ENCODE measurements at regions of chr5 and their contacts with region 1.

Region 1: GRCh38 chr5:68460147-68460798 is 244.7 kb downstream of the PIK3R1 start:
- DNase-seq: peak in 2 of 5 donors; percentile 23 to 46
- ATAC-seq: peak in 3 of 4 donors; percentile 29 to 53 (median 49)
- H3K4me3 ChIP-seq: no peak overlapping the region
- H3K27ac ChIP-seq: no peak overlapping the region
- H3K4me1 ChIP-seq: peaks cover 0 to 19% (median 7%) of the 10 kb centered on the region in 12 donors
- H3K27me3 ChIP-seq: no peaks in the 10 kb centered on the region
- CTCF ChIP-seq: peak; percentile 56 to 85 (median 77)
- POLR2A ChIP-seq: no peak

Region 2: GRCh38 chr5:68343421-68343826 is 116.8 kb before region 1 on chr5:
- intact Hi-C with region 1: loop called in 1 of 10 experiments (anchors 5 kb)
- DNase-seq: peak in 4 of 5 donors; percentile 36 to 87 (median 46)
- ATAC-seq: peak; percentile 93 to 97 (median 96)
- H3K4me3 ChIP-seq: no peak overlapping the region
- H3K27ac ChIP-seq: peak overlapping the region; percentile 31 to 70 (median 58)
- H3K4me1 ChIP-seq: peaks cover 0 to 33% (median 5%) of the 10 kb centered on the region in 12 donors
- H3K27me3 ChIP-seq: no peaks in the 10 kb centered on the region
- CTCF ChIP-seq: no peak
- POLR2A ChIP-seq: no peak

Region 3: DNA sequence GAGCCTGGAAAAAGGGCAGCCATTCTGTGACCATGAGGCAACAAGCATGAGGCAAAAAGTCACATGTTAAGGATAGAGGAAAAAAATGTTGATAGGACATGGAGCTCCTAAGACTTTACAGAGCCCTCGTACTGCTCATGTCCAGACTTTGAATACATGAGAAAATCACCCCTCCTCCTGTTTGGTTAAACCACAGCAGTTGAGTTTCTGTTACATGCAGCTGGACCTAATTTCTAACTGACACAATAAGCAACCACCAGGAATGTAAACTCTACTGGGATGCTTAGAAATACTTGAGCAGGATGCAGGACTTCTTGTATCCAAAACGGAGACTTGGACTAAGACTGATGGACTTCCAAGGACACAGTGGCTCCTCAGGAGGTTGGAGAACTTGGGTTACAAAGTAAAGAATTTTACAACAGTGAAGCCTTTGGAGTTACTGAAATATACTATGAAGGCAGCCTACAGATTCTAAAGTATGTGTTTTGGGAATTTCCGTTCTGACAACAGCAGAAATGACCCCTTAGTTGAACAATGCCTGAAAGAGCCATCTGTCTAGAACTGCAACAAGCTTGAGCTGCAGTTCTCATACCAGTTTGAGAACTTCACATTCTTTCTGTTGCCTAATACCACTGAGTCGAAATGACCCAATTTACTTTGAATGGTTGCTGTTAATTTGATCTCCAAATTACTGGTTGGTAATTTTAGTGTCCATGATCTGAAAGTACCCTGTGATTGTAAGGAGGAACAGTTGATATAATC is 24.2 kb after region 1 on chr5:
- intact Hi-C with region 1: no loop called
- DNase-seq: no peak
- ATAC-seq: no peak
- H3K4me3 ChIP-seq: no peak overlapping the region
- H3K27ac ChIP-seq: no peak overlapping the region
- H3K4me1 ChIP-seq: peaks cover 0 to 3% (median 0%) of the 10 kb centered on the region in 12 donors
- H3K27me3 ChIP-seq: no peaks in the 10 kb centered on the region
- CTCF ChIP-seq: no peak
- POLR2A ChIP-seq: no peak

Region 4: DNA sequence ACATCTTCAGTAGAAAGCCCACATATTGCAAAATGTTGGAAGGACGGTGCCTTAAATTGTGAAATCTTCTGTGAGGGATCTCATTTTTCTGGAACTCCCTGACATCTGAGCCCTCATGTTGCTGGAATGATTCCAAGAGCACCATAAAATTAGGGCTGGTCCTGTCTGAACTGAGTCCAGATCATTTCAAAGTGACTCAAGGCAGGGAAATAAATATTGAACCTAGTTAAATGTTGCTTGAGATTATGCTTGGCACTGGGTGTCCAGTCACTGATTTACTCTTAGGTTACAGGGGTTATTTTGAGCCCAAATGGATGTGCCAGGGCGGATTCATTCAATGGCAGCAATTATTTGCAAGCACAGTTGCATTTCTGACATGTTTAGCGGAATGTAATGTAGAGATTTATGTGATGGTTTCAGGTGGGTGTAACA is 192.3 kb after region 1 on chr5:
- intact Hi-C with region 1: loop called in 1 of 10 experiments (anchors 10 kb)
- DNase-seq: no peak
- ATAC-seq: no peak
- H3K4me3 ChIP-seq: no peak overlapping the region
- H3K27ac ChIP-seq: no peak overlapping the region
- H3K4me1 ChIP-seq: no peaks in the 10 kb centered on the region
- H3K27me3 ChIP-seq: no peaks in the 10 kb centered on the region
- CTCF ChIP-seq: no peak
- POLR2A ChIP-seq: no peak

Region 5: DNA sequence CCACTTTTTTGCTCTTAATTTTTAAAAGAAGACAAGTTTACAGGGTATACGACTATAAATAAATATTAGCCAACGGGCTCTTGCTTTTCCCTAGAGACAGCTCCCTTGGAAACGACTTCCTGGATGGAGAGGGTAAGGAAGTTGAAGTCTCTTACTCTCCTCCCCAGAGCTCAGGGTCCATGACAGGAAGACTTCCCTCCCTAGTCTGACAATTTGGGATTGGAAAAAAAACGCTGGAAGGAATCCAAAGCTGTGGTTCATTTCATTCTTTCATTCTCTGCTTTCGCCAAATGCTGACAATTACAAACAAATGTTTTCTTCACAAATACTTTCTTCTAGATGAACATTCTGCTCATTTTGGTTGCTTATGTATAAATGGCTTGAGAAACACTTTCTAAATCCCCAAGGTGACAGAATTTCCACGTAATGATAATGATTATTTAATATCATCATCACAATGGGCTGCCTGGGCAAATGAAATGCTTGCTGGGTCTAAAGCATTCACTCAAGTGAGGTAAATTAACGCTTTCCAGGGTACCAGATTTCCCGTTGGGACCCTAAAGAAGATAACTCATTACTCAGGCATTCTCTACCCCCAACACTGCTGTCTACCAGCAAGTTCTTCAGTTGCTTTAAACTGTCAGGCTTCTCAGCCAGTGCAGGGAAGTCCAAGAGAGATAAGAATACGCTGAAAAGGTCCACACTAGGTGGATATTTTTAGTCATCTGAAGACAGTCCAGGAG is 493.8 kb after region 1 on chr5:
- intact Hi-C with region 1: loop called in 2 of 10 experiments (anchors 10 kb)
- DNase-seq: peak in 1 of 5 donors; percentile 60
- ATAC-seq: peak in 3 of 4 donors; percentile 77 to 85 (median 82)
- H3K4me3 ChIP-seq: no peak overlapping the region
- H3K27ac ChIP-seq: peak overlapping the region in 5 of 12 donors; percentile 11 to 40 (median 24)
- H3K4me1 ChIP-seq: peaks cover 0 to 48% (median 21%) of the 10 kb centered on the region in 12 donors
- H3K27me3 ChIP-seq: no peaks in the 10 kb centered on the region
- CTCF ChIP-seq: no peak
- POLR2A ChIP-seq: no peak